CD8-positive, alpha-beta T cell (primary cell): ENCODE measurements at regions of chr1 and their contacts with region 1.

Region 1: GRCh38 chr1:161399257-161399998 is 31.8 kb upstream of the CFAP126 start:
- DNase-seq: peak; percentile 84 to 97 (median 95)
- ATAC-seq: peak; percentile 83
- H3K4me3 ChIP-seq: peak overlapping the region; percentile 81 to 87
- H3K4me3 Mint-ChIP-seq: peak overlapping the region; percentile 96
- H3K27ac ChIP-seq: peak overlapping the region; percentile 96 to 98
- H3K27ac Mint-ChIP-seq: peak overlapping the region; percentile 98
- H3K4me1 ChIP-seq: peaks cover 19% of the 10 kb centered on the region
- H3K4me1 Mint-ChIP-seq: peaks cover 28% of the 10 kb centered on the region
- H3K27me3 ChIP-seq: no peaks in the 10 kb centered on the region
- H3K27me3 Mint-ChIP-seq: no peaks in the 10 kb centered on the region
- CTCF ChIP-seq: peak; percentile 88

Region 2: DNA sequence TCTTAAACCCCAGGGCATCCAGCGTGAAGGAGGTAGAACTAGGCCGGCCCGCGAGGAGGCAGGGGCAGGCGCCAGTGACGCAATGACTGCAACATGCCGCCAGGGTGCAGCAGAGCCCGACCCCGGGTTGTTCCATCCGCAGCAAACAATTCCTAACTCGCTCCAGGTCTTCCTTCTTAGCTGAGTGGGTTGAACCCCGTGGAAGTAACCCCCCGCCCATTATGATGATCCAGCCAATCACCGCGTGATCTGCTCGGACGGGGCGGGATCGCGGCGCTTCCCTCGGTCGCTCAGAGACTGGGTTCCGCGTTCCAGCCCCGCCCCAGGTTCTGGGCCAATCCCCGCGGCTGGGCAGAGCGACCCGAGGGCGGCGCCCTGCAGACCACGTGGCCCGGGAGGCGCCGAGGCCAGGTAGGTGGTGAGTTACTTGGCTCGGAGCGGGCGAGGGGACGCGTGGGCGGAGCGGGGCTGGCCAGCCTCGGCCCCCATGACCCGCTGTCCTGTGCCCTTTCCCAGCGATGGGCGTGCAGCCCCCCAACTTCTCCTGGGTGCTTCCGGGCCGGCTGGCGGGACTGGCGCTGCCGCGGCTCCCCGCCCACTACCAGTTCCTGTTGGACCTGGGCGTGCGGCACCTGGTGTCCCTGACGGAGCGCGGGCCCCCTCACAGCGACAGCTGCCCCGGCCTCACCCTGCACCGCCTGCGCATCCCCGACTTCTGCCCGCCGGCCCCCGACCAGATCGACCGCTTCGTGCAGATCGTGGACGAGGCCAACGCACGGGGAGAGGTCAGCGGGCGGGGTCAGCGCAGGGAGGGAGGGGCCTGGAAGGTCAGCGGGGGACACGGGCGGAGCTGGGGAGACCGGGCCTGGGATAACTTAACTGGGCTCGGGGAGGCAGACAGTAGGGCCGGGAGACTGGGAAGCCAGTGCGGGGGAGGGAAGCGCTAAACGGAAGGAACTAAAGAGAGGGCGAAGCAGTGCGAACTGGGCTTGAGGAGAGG is 1618.5 kb before region 1 on chr1 and contains the start of gene DUSP23:
- CTCF ChIA-PET with region 1: no interaction called
- POLR2A ChIA-PET with region 1: no interaction called
- intact Hi-C with region 1: loop called in 1 of 2 experiments (anchors 5 kb)
- DNase-seq: peak; percentile 90 to 98 (median 95)
- ATAC-seq: peak; percentile 96
- H3K4me3 ChIP-seq: peak within 1 kb of the TSS; percentile 59 to 69
- H3K4me3 Mint-ChIP-seq: peak within 1 kb of the TSS; percentile 89
- H3K27ac ChIP-seq: peak within 1 kb of the TSS; percentile 16 to 62
- H3K27ac Mint-ChIP-seq: peak within 1 kb of the TSS; percentile 89
- H3K4me1 ChIP-seq: peaks cover 10% of the 10 kb centered on the region
- H3K4me1 Mint-ChIP-seq: peaks cover 28% of the 10 kb centered on the region
- H3K27me3 ChIP-seq: no peaks in the 10 kb centered on the region
- H3K27me3 Mint-ChIP-seq: no peaks in the 10 kb centered on the region
- CTCF ChIP-seq: peak; percentile 78
- total RNA-seq, gene DUSP23: 3.8 to 6.3 TPM

Region 3: DNA sequence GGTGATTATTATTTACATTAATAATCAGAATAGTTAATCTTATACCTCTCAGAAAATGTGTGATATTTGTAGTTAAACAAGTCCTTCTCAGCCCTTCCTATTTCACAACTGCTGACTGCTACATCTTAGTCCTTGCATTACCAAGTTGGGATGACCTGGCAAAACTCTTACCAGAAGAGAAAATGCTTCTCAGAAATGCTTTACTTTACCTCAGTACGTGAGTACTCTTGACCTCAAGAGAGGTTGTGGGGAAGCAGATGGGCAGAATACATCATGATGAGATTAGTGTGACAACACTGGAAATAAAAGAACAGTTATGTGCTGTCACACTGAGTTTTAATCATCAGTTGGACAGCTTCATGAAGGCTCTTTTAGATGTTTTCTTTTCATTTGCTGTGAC is 47.9 kb before region 1 on chr1:
- CTCF ChIA-PET with region 1: no interaction called
- POLR2A ChIA-PET with region 1: no interaction called
- intact Hi-C with region 1: no loop called
- DNase-seq: no peak
- ATAC-seq: no peak
- H3K4me3 ChIP-seq: no peak overlapping the region
- H3K4me3 Mint-ChIP-seq: no peak overlapping the region
- H3K27ac ChIP-seq: no peak overlapping the region
- H3K27ac Mint-ChIP-seq: no peak overlapping the region
- H3K4me1 ChIP-seq: no peaks in the 10 kb centered on the region
- H3K4me1 Mint-ChIP-seq: peaks cover 15% of the 10 kb centered on the region
- H3K27me3 ChIP-seq: no peaks in the 10 kb centered on the region
- H3K27me3 Mint-ChIP-seq: no peaks in the 10 kb centered on the region
- CTCF ChIP-seq: no peak

Region 4: GRCh38 chr1:161531986-161532643 is 132.7 kb after region 1 on chr1:
- CTCF ChIA-PET with region 1: no interaction called
- POLR2A ChIA-PET with region 1: no interaction called
- intact Hi-C with region 1: loop called in 1 of 2 experiments (anchors 5 kb)
- DNase-seq: no peak
- ATAC-seq: no peak
- H3K4me3 ChIP-seq: no peak overlapping the region
- H3K4me3 Mint-ChIP-seq: no peak overlapping the region
- H3K27ac ChIP-seq: no peak overlapping the region
- H3K27ac Mint-ChIP-seq: peak overlapping the region; percentile 22
- H3K4me1 ChIP-seq: peaks cover 7% of the 10 kb centered on the region
- H3K4me1 Mint-ChIP-seq: peaks cover 11% of the 10 kb centered on the region
- H3K27me3 ChIP-seq: no peaks in the 10 kb centered on the region
- H3K27me3 Mint-ChIP-seq: no peaks in the 10 kb centered on the region
- CTCF ChIP-seq: no peak

Region 5: GRCh38 chr1:161749509-161750407 is 350.3 kb after region 1 on chr1 and contains the start of gene DUSP12:
- CTCF ChIA-PET with region 1: no interaction called
- POLR2A ChIA-PET with region 1: no interaction called
- intact Hi-C with region 1: loop called in 1 of 2 experiments (anchors 5 kb)
- DNase-seq: peak; percentile 70 to 92 (median 85)
- ATAC-seq: peak; percentile 95
- H3K4me3 ChIP-seq: peak within 1 kb of the TSS; percentile 88 to 99
- H3K4me3 Mint-ChIP-seq: peak within 1 kb of the TSS; percentile 100
- H3K27ac ChIP-seq: peak within 1 kb of the TSS; percentile 68 to 76
- H3K27ac Mint-ChIP-seq: peak within 1 kb of the TSS; percentile 96
- H3K4me1 ChIP-seq: peaks cover 23% of the 10 kb centered on the region
- H3K4me1 Mint-ChIP-seq: peaks cover 41% of the 10 kb centered on the region
- H3K27me3 ChIP-seq: no peaks in the 10 kb centered on the region
- H3K27me3 Mint-ChIP-seq: peaks cover 6% of the 10 kb centered on the region
- CTCF ChIP-seq: no peak
- total RNA-seq, gene DUSP12: 27.9 to 31.1 TPM

Region 6: GRCh38 chr1:163321311-163322305 is 1922.2 kb after region 1 on chr1 and contains the start of gene NUF2:
- CTCF ChIA-PET with region 1: no interaction called
- POLR2A ChIA-PET with region 1: no interaction called
- intact Hi-C with region 1: loop called in 1 of 2 experiments (anchors 5 kb)
- DNase-seq: peak; percentile 94 to 98 (median 96)
- ATAC-seq: peak; percentile 97
- H3K4me3 ChIP-seq: peak within 1 kb of the TSS; percentile 58 to 80
- H3K4me3 Mint-ChIP-seq: peak within 1 kb of the TSS; percentile 96
- H3K27ac ChIP-seq: peak within 1 kb of the TSS; percentile 49 to 81
- H3K27ac Mint-ChIP-seq: peak within 1 kb of the TSS; percentile 98
- H3K4me1 ChIP-seq: peaks cover 16% of the 10 kb centered on the region
- H3K4me1 Mint-ChIP-seq: peaks cover 24% of the 10 kb centered on the region
- H3K27me3 ChIP-seq: no peaks in the 10 kb centered on the region
- H3K27me3 Mint-ChIP-seq: no peaks in the 10 kb centered on the region
- CTCF ChIP-seq: no peak
- total RNA-seq, gene NUF2: 1.2 to 2.5 TPM